ENCODE measurements at regions of chr5 and their contacts with region 1.

Region 1: DNA sequence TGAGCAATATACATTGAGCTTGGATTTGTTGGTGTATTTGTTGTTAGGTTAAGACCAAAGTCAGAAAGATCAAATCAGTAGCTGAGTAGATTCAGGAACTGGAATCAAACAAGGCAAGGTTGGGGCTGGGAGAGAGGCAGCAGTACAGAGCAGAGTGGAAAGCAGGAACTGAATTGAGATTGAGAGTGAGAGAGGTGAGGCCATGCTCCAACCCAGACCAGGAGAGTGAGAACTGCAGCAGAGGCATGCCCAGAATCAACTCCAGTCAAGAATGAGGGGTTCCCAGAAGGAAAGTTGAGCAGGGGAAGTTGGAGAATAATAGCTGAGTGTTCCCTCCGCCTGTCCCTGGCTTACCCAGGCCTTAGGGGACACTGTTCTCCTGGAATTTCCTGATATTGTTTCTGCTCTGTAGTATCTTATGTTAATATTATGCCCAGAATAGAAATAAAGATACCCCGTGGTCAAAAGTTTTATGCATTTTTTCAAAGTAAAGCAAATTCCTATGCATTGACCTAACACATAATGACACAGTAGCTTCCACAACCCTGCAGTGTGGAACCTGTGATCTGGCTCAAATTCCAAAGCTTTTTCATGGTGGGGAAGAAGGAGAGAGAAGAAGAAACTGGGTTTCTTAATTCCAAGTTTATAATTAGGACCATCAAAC is 82.7 kb downstream of the SV2C start:
- DNase-seq: no peak
- H3K4me3 ChIP-seq: no peak overlapping the region
- H3K27ac ChIP-seq: no peak overlapping the region
- H3K4me1 ChIP-seq: no peaks in the 10 kb centered on the region
- H3K27me3 ChIP-seq: peaks cover 9% of the 10 kb centered on the region
- CTCF ChIP-seq: no peak

Region 2: GRCh38 chr5:75744355-75744754 is 421.5 kb before region 1 on chr5:
- CTCF ChIA-PET with region 1: no interaction called
- POLR2A ChIA-PET with region 1: no interaction called
- intact Hi-C with region 1: loop called (anchors 10 kb)
- DNase-seq: no peak
- H3K4me3 ChIP-seq: no peak overlapping the region
- H3K27ac ChIP-seq: no peak overlapping the region
- H3K4me1 ChIP-seq: no peaks in the 10 kb centered on the region
- H3K27me3 ChIP-seq: peaks cover 12% of the 10 kb centered on the region
- CTCF ChIP-seq: no peak

Region 3: DNA sequence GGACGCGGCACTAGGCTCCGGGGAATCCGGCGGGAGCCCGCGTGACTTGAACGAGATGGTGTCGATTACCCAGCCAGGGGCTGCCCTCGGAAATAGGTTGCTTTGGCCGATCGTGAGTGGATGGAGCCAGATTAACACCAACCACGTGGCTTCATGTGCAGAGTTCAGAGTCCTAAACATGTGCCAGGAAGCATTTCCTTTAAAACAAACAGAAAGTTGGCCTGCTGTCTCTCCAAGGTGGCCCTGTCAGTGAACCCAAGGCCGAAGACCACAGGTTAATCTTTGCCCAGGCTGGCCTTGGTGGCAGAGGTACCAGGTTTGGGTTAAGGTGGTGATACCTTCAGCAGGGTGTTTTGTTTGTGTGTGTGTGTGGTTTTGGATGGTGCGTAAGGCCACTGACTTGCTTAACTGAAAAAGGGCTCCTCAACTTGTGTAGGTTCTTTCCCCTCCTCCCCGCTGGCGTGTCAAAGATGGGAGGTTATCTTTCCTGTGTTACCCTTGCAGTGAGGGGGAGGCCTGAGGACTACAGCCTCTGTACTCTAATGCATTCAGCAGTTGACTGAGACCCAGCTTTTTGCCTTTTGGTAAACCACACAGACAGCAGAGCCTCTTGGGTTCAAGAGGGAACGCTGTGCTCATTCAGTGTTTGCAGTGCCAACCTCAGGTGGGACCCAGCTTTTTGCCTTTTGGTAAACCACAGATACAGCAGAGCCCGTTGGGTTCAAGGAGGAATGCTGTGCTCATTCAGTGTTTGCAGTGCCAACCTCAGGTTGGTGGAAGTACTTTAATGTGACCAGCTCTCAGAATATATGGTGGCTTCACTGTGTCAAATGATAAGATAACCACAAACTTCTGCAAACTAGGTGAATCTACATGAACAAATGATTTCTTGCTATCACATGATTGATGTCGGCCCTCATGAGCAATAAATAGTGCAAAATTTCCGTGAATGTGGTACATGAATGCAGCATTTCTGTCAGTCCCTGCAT is 238.7 kb after region 1 on chr5:
- CTCF ChIA-PET with region 1: no interaction called
- POLR2A ChIA-PET with region 1: no interaction called
- intact Hi-C with region 1: no loop called
- DNase-seq: peak; percentile 33
- H3K4me3 ChIP-seq: peak overlapping the region; percentile 89
- H3K27ac ChIP-seq: no peak overlapping the region
- H3K4me1 ChIP-seq: peaks cover 25% of the 10 kb centered on the region
- H3K27me3 ChIP-seq: no peaks in the 10 kb centered on the region
- CTCF ChIP-seq: no peak

Measured in A673 (cell line).